ENCODE measurements at regions of chr2 and their contacts with region 1.

Region 1: DNA sequence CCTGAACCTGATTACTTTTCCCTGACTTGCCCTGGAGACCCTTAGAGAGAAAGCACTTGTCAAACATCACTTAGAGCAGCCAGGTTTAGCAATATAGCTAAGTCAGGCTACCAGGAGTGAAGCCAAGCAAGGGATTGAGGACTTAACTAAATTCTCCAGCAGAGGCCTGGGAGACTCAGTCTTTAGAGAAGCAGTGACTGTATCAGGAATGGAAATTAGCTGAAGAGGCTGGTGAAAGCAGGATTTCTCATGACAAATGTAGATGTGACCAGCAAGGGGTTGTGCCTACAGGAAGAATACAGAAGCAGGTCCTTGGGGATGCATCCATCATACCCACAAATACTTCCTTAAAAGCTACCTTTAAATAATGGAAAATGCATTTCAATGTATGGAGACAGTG is 368.9 kb upstream of the MEIS1 start:
- DNase-seq: no peak
- H3K4me3 ChIP-seq: no peak overlapping the region
- H3K27ac ChIP-seq: no peak overlapping the region
- H3K4me1 ChIP-seq: no peaks in the 10 kb centered on the region
- H3K27me3 ChIP-seq: no peaks in the 10 kb centered on the region
- CTCF ChIP-seq: no peak

Region 2: DNA sequence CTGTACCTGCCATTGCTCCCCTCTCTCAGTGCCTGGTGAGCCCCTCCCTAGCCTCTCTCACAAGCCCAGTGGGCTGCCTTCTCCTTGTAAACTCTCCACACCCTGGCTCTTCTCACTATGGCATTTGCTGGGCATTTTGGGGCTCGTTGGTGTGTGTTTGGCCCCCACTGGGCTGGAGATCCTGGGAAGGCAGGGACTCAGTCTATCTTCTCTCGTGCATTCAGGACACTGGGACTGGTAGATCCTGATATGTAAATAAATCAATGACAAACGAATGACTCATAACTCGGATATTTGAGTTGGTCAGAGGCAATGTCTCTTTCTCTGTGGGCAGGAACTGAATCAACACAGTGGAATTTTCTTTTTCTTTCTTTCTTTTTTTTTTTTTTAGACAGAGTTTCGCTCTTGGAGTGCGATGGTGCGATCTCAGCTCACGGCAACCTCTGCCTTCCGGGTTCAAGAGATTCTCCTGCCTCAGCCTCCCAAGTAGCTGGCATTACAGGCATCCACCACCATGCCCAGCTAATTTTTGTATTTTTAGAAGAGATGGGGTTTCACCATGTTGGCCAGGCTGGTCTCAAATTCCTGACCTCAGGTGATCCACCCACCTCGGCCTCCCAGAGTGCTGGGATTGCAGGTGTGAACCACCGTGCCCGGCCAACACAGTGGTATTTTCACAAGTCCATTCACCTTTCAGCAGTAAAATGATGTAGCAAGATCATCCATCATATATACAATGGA is 489.0 kb before region 1 on chr2:
- intact Hi-C with region 1: no loop called
- DNase-seq: no peak
- H3K4me3 ChIP-seq: peak overlapping the region; percentile 4 to 15
- H3K27ac ChIP-seq: peak overlapping the region; percentile 43 to 61
- H3K4me1 ChIP-seq: peaks cover 0 to 28% (median 9%) of the 10 kb centered on the region in 4 donors
- H3K27me3 ChIP-seq: no peaks in the 10 kb centered on the region
- CTCF ChIP-seq: no peak

Region 3: DNA sequence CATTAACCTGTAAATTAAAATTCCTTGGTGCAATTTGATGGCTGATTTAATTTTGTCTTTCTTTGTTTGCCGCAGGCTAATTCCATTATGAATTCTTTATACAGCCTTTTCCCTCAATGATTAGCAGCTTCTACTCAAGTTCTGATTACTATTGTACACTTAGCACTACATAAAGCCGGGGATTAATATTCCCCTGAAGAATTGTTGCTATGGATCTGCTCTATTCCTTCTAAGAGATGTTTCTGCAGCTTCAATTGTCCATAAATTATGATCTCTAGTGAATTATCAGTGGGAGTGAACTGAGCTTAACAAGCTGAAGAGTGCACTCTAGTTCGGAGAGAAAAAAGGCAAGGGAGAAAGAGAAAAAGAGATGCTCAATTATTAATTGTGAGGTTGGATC is 199.9 kb before region 1 on chr2:
- intact Hi-C with region 1: no loop called
- DNase-seq: no peak
- H3K4me3 ChIP-seq: no peak overlapping the region
- H3K27ac ChIP-seq: no peak overlapping the region
- H3K4me1 ChIP-seq: peaks cover 0 to 7% (median 2%) of the 10 kb centered on the region in 4 donors
- H3K27me3 ChIP-seq: peaks cover 0 to 5% of the 10 kb centered on the region in 2 donors
- CTCF ChIP-seq: no peak

Region 4: GRCh38 chr2:66137606-66138130 is 71.6 kb after region 1 on chr2:
- intact Hi-C with region 1: loop called (anchors 2 kb)
- DNase-seq: no peak
- H3K4me3 ChIP-seq: no peak overlapping the region
- H3K27ac ChIP-seq: no peak overlapping the region
- H3K4me1 ChIP-seq: no peaks in the 10 kb centered on the region
- H3K27me3 ChIP-seq: no peaks in the 10 kb centered on the region
- CTCF ChIP-seq: no peak

Measured in tibial artery (tissue), 4 donors.